ENCODE measurements at regions of chr2 and their contacts with region 1.

Region 1: DNA sequence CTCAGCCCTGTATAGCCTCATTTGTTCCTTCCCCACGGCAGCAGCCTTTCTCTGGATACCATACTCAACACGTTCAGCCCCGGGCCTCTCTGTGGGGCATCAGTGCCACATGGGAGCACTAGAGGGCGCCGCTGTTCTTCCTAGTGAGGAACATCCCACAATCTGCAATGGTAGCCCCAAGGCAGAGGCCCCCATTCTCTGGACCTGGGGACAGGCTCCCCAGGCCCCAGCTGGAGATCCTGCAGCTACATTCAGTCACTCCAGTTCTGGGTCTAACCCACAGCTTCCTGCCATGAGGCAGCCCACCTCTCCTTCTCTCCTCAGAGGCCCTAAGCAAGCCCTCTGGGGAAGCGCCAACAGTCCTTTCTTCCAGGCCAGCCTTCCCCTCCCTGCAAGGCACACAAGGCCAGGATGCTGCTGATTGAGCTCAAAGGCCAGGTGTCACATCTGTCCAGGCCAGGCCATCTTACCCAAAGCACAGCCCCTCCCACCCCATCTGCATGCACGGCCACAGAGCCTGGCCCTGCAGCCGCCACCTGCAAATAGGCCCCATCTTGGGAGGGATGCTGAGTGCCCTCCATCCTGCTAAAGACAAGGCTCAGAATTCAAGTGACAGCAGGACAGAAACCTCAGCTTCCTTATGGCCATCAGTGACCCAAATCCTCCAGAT is 14.3 kb upstream of the SFXN5 start:
- DNase-seq: peak; percentile 88
- H3K4me3 Mint-ChIP-seq: no peak overlapping the region
- H3K27ac Mint-ChIP-seq: no peak overlapping the region
- H3K4me1 Mint-ChIP-seq: no peaks in the 10 kb centered on the region
- H3K27me3 Mint-ChIP-seq: no peaks in the 10 kb centered on the region

Region 2: GRCh38 chr2:72931280-72931910 is 154.4 kb before region 1 on chr2:
- CTCF ChIA-PET with region 1: no interaction called
- POLR2A ChIA-PET with region 1: no interaction called
- intact Hi-C with region 1: no loop called
- DNase-seq: peak; percentile 48
- H3K4me3 Mint-ChIP-seq: no peak overlapping the region
- H3K27ac Mint-ChIP-seq: no peak overlapping the region
- H3K4me1 Mint-ChIP-seq: no peaks in the 10 kb centered on the region
- H3K27me3 Mint-ChIP-seq: peaks cover 6% of the 10 kb centered on the region

Region 3: DNA sequence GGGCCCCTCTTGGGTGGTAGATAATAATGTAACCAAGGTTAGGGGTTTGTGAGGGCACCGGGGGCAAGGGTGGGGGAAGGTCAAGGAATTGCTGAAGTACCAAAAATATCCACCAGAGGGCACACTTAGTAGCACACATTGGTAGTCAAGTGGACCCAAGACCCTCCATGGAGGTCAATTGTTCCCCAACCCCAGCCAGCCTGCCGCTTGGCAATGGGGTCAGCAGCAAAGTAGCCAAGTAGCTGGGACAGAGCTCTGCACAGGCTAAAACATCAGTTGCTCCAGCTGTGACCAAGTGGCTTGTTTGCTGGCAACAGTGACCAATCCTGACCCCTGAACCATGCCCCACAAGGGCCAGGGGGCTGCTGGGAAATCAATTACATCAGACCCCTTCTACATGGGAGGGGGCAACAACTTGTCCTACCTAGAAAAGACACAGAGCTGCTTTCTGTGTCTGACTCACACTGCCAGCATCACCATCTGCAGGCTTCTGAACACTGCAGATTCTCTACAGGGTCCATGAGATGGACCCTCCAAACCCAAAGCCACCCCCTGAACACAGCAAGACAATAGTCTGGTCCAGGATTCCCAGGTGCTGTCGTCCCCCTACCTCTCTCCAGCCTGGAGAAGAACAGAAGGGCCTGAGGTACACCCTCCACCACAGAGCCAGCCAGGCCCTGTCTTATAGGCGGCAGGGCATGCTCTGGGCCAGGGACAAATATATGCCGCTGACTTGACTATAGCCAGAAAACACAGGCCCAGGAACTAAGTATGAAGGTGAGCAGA is 92.5 kb before region 1 on chr2:
- CTCF ChIA-PET with region 1: interaction called, 3 read pairs
- POLR2A ChIA-PET with region 1: no interaction called
- intact Hi-C with region 1: loop called (anchors 5 kb)
- DNase-seq: peak; percentile 40
- H3K4me3 Mint-ChIP-seq: no peak overlapping the region
- H3K27ac Mint-ChIP-seq: no peak overlapping the region
- H3K4me1 Mint-ChIP-seq: no peaks in the 10 kb centered on the region
- H3K27me3 Mint-ChIP-seq: no peaks in the 10 kb centered on the region

Region 4: DNA sequence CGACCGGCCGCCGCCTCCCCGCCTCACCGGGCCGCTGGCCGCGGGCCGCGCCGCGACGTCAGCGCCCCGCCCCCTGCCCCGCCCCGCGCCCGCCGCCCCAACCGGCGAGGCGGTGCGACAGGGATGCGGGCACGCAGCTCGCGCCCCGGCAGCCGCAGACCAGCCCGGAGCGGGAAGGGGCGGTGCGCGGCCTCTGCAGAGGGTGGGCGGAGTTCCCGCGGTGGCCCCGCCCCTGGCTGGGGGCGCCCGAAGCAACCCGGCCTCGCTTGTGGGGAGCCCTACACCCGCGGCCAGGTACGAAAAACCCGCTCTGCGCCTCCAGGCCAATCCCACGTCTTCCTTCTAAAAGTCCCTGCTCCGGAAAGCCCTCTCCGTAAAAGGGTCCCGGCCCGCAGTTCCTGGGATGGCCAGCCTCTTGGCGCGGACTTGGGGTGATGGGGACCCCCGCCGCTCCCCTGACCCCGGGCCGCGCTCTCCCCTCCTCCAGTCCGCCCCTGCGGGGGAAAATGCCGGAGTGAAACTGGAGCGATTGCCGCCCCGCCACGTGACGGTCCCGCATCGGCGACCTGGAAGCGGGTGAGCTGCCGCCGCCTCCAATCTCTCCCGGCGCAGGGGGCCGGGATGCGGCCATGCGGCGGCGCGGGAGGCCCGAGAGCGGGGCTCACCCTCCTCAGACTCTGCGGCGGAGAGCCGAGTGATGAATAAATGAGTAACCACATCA is 27.2 kb after region 1 on chr2 and contains the start of gene RAB11FIP5:
- CTCF ChIA-PET with region 1: interaction called, 16 read pairs
- POLR2A ChIA-PET with region 1: no interaction called
- intact Hi-C with region 1: no loop called
- DNase-seq: peak; percentile 83
- H3K4me3 Mint-ChIP-seq: peak within 1 kb of the TSS; percentile 81
- H3K27ac Mint-ChIP-seq: no peak within 1 kb of the TSS
- H3K4me1 Mint-ChIP-seq: peaks cover 21% of the 10 kb centered on the region
- H3K27me3 Mint-ChIP-seq: no peaks in the 10 kb centered on the region
- total RNA-seq, gene RAB11FIP5: 11.1 to 11.2 TPM

Region 5: GRCh38 chr2:73156539-73157124 is 70.8 kb after region 1 on chr2:
- CTCF ChIA-PET with region 1: interaction called, 69 read pairs
- POLR2A ChIA-PET with region 1: no interaction called
- intact Hi-C with region 1: no loop called
- DNase-seq: peak; percentile 59
- H3K4me3 Mint-ChIP-seq: no peak overlapping the region
- H3K27ac Mint-ChIP-seq: no peak overlapping the region
- H3K4me1 Mint-ChIP-seq: no peaks in the 10 kb centered on the region
- H3K27me3 Mint-ChIP-seq: peaks cover 27% of the 10 kb centered on the region

Region 6: GRCh38 chr2:73163483-73164367 is 77.9 kb after region 1 on chr2:
- CTCF ChIA-PET with region 1: interaction called, 44 read pairs
- POLR2A ChIA-PET with region 1: no interaction called
- intact Hi-C with region 1: loop called (anchors 1 kb)
- DNase-seq: peak; percentile 81
- H3K4me3 Mint-ChIP-seq: no peak overlapping the region
- H3K27ac Mint-ChIP-seq: no peak overlapping the region
- H3K4me1 Mint-ChIP-seq: peaks cover 2% of the 10 kb centered on the region
- H3K27me3 Mint-ChIP-seq: peaks cover 7% of the 10 kb centered on the region

Measured in activated CD4-positive, alpha-beta memory T cell treated with anti-CD3 and anti-CD28 coated beads for 36 hours (primary cell).